CD14-positive monocyte (primary cell): ENCODE measurements at regions of chr17 and their contacts with region 1.

Region 1: GRCh38 chr17:39621523-39622379 is 5.0 kb upstream of the PPP1R1B start:
- DNase-seq: peak; percentile 79 to 86 (median 84)
- H3K4me3 ChIP-seq: no peak overlapping the region
- H3K4me3 Mint-ChIP-seq: peak overlapping the region; percentile 25 to 69
- H3K27ac ChIP-seq: no peak overlapping the region
- H3K27ac Mint-ChIP-seq: peak overlapping the region in 3 of 7 donors; percentile 48 to 66 (median 64)
- H3K4me1 ChIP-seq: peaks cover 20 to 29% of the 10 kb centered on the region in 2 donors
- H3K4me1 Mint-ChIP-seq: peaks cover 26% of the 10 kb centered on the region
- H3K27me3 ChIP-seq: peaks cover 17 to 61% of the 10 kb centered on the region in 2 donors
- H3K27me3 Mint-ChIP-seq: peaks cover 52 to 80% (median 74%) of the 10 kb centered on the region in 3 donors
- CTCF ChIP-seq: peak; percentile 100

Region 2: DNA sequence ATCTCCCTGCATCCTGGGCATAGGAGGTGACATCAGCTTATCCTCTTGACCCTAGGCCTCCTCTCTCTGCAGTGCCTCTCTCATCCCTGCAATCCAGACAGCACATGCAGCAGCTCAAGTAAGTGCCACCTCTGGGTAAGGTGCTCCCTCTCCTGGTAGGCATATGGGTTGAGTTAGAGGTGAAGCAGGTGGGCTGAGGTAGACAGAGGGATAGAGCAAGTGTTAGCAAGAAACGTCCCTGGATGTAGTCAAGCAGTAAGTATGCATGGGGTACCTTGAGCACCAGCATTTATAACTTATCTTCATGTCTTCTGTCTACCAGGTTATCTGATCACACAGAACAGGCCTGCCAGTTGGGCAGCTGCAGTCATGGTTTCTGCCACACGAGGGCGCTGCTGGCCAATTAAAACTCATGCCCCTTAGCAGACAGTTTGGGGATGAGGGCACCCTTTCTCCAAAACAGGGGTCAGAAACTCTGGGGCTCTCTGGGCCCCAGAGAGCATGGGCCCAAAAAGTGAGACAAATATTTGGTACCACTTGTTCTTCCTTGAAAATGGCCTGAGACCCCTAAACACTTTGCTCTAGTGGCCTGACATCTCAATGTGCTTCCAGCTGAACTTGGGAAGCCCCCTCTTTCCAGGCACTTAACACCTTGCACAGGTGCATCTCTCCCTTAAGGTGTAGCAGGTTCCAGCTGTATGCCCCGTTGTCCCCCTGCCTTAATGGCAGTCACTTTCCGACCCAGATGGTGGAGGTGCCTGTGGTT is 73.9 kb before region 1 on chr17:
- intact Hi-C with region 1: loop called (anchors 5 kb)
- DNase-seq: peak; percentile 46 to 57 (median 54)
- H3K4me3 ChIP-seq: no peak overlapping the region
- H3K4me3 Mint-ChIP-seq: no peak overlapping the region
- H3K27ac ChIP-seq: no peak overlapping the region
- H3K27ac Mint-ChIP-seq: no peak overlapping the region
- H3K4me1 ChIP-seq: peaks cover 3 to 13% of the 10 kb centered on the region in 2 donors
- H3K4me1 Mint-ChIP-seq: peaks cover 18% of the 10 kb centered on the region
- H3K27me3 ChIP-seq: no peaks in the 10 kb centered on the region
- H3K27me3 Mint-ChIP-seq: peaks cover 0 to 2% (median 0%) of the 10 kb centered on the region in 3 donors
- CTCF ChIP-seq: peak; percentile 95

Region 3: GRCh38 chr17:39598047-39598481 is 23.7 kb before region 1 on chr17:
- intact Hi-C with region 1: no loop called
- DNase-seq: no peak
- H3K4me3 ChIP-seq: no peak overlapping the region
- H3K4me3 Mint-ChIP-seq: peak overlapping the region in 1 of 2 donors; percentile 75
- H3K27ac ChIP-seq: no peak overlapping the region
- H3K27ac Mint-ChIP-seq: no peak overlapping the region
- H3K4me1 ChIP-seq: no peaks in the 10 kb centered on the region
- H3K4me1 Mint-ChIP-seq: peaks cover 8% of the 10 kb centered on the region
- H3K27me3 ChIP-seq: peaks cover 81 to 97% of the 10 kb centered on the region in 2 donors
- H3K27me3 Mint-ChIP-seq: peaks cover 96 to 99% (median 97%) of the 10 kb centered on the region in 3 donors
- CTCF ChIP-seq: no peak

Region 4: GRCh38 chr17:39636927-39637736 is 15.4 kb after region 1 on chr17 and contains the start of gene STARD3:
- intact Hi-C with region 1: loop called in 1 of 2 experiments (anchors 1 kb)
- DNase-seq: peak; percentile 84 to 88 (median 85)
- H3K4me3 ChIP-seq: peak within 1 kb of the TSS; percentile 85 to 90 (median 87)
- H3K4me3 Mint-ChIP-seq: peak within 1 kb of the TSS; percentile 87 to 93
- H3K27ac ChIP-seq: peak within 1 kb of the TSS; percentile 71 to 90
- H3K27ac Mint-ChIP-seq: peak within 1 kb of the TSS; percentile 86 to 96 (median 93)
- H3K4me1 ChIP-seq: peaks cover 59 to 71% of the 10 kb centered on the region in 2 donors
- H3K4me1 Mint-ChIP-seq: peaks cover 64% of the 10 kb centered on the region
- H3K27me3 ChIP-seq: peaks cover 0 to 4% of the 10 kb centered on the region in 2 donors
- H3K27me3 Mint-ChIP-seq: peaks cover 4 to 8% (median 8%) of the 10 kb centered on the region in 3 donors
- CTCF ChIP-seq: no peak
- polyA plus RNA-seq, gene STARD3: 35.1 to 114 (median 45.3) TPM

Region 5: DNA sequence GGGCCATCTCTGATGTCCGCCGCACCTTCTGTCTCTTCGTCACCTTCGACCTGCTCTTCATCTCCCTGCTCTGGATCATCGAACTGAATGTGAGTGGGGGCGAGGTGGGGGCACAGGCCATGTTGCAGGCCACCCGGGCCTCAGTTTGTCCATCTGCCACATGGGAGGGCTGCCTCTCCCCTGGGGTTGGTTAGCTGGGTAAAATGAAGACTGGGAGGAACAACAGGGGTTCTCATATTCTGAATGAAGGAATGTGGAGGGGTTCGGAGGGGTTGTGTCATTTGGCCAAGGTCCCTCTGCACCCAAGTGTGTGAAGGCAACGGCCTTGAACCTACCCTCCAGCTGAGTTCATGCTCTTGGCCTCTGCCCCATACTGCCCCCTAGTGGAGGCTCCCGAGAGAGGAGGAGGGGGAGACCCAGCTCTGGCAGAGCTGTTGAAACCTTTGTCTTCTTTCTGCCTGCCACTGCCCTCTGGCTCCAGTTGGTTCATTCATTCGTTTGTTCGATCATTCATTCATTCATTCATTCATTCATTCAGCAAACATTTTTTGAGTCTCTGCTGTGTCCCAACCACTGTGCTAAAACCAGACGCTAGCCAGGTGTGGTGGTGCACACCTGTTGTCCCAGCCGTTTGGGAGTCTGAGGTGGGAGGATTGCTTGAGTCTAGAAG is 32.0 kb after region 1 on chr17:
- intact Hi-C with region 1: loop called in 1 of 2 experiments (anchors 2 kb)
- DNase-seq: peak; percentile 53 to 62 (median 58)
- H3K4me3 ChIP-seq: no peak overlapping the region
- H3K4me3 Mint-ChIP-seq: no peak overlapping the region
- H3K27ac ChIP-seq: no peak overlapping the region
- H3K27ac Mint-ChIP-seq: peak overlapping the region in 2 of 7 donors; percentile 68 to 89
- H3K4me1 ChIP-seq: peaks cover 3 to 7% of the 10 kb centered on the region in 2 donors
- H3K4me1 Mint-ChIP-seq: peaks cover 24% of the 10 kb centered on the region
- H3K27me3 ChIP-seq: no peaks in the 10 kb centered on the region
- H3K27me3 Mint-ChIP-seq: peaks cover 0 to 3% (median 1%) of the 10 kb centered on the region in 3 donors
- CTCF ChIP-seq: peak; percentile 95

Region 6: DNA sequence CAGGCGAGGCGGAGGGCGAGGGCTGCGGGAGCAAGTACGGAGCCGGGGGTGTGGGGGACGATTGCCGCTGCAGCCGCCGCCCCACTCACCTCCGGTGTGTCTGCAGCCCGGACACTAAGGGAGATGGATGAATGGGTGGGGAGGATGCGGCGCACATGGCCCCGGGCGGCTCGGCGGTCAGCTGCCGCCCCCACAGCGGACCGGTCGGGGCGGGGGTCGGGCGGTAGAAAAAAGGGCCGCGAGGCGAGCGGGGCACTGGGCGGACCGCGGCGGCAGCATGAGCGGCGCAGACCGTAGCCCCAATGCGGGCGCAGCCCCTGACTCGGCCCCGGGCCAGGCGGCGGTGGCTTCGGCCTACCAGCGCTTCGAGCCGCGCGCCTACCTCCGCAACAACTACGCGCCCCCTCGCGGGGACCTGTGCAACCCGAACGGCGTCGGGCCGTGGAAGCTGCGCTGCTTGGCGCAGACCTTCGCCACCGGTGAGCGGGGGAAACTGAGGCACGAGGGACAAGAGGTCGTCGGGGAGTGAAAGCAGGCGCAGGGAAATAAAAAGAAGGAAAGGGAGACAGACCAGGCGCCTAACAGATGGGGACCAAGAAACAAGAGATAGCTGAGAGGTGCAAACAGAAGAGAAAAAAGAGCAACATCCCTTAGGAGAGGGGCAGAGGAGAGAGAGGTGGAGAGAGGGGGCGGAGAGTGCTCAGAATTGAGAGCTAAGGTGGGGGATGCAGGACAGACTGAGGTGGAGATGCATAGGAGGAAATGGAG is 46.6 kb after region 1 on chr17 and contains the start of gene PNMT:
- intact Hi-C with region 1: loop called in 1 of 2 experiments (anchors 5 kb)
- DNase-seq: peak; percentile 29 to 54 (median 45)
- H3K4me3 ChIP-seq: peak within 1 kb of the TSS in 1 of 3 experiments; percentile 63
- H3K4me3 Mint-ChIP-seq: peak within 1 kb of the TSS in 1 of 2 donors; percentile 83
- H3K27ac ChIP-seq: no peak within 1 kb of the TSS
- H3K27ac Mint-ChIP-seq: peak within 1 kb of the TSS in 1 of 7 donors; percentile 46
- H3K4me1 ChIP-seq: peaks cover 12 to 14% of the 10 kb centered on the region in 2 donors
- H3K4me1 Mint-ChIP-seq: peaks cover 14% of the 10 kb centered on the region
- H3K27me3 ChIP-seq: peaks cover 19 to 68% of the 10 kb centered on the region in 2 donors
- H3K27me3 Mint-ChIP-seq: peaks cover 57 to 92% (median 71%) of the 10 kb centered on the region in 3 donors
- CTCF ChIP-seq: peak; percentile 62
- polyA plus RNA-seq, gene PNMT: not detected

Region 7: DNA sequence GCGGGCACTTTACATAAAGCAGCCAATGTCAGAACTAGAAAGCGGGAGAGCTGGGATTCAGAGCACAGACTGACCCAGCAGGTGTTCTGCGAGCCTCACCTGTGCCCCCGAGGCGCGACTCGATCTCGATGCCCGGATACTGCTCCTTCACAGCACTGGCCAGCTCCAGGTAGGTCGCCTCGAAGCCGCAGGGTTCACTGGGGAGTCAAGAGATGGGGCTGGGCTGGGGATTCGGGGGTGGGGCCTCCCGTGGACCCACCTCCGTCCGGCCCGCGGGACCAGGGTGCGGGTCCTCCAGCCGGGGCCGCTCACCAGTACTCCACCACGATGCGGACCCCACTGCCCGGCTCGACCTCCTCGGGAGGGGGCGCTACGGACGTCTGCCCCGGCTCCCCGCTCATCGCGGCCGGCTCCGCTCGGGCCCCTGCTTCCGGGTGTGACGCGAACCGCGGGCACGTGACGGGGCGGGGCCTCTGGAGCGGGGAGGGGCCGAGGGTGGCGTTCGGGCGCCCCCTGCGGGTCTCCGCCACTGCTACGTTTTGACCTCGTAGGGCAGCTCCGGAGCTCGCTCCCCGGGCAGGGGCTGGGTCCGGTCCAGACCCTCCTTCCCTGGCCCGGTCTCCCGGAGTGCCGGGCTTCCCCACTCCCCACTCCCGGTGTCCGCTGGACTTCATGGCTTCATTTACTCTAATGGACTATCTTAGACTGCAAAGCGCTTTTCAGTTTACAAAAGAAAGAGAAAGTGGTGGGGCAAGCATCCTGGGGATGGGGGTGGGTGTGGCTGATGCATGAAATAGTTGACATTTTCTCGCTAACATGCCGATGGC is 108.6 kb after region 1 on chr17 and contains the start of gene MIEN1:
- intact Hi-C with region 1: loop called in 1 of 2 experiments (anchors 5 kb)
- DNase-seq: peak; percentile 83 to 88 (median 84)
- H3K4me3 ChIP-seq: peak within 1 kb of the TSS; percentile 69 to 95 (median 86)
- H3K4me3 Mint-ChIP-seq: peak within 1 kb of the TSS; percentile 84 to 90
- H3K27ac ChIP-seq: peak within 1 kb of the TSS; percentile 48 to 96
- H3K27ac Mint-ChIP-seq: peak within 1 kb of the TSS; percentile 87 to 94 (median 91)
- H3K4me1 ChIP-seq: peaks cover 9 to 13% of the 10 kb centered on the region in 2 donors
- H3K4me1 Mint-ChIP-seq: peaks cover 9% of the 10 kb centered on the region
- H3K27me3 ChIP-seq: peaks cover 0 to 5% of the 10 kb centered on the region in 2 donors
- H3K27me3 Mint-ChIP-seq: peaks cover 11 to 19% (median 17%) of the 10 kb centered on the region in 3 donors
- CTCF ChIP-seq: peak; percentile 97
- polyA plus RNA-seq, gene MIEN1: 61.7 to 141 (median 124) TPM

Region 8: GRCh38 chr17:39754161-39754951 is 132.6 kb after region 1 on chr17:
- intact Hi-C with region 1: loop called (anchors 2 to 5 kb)
- DNase-seq: peak; percentile 96 to 98 (median 98)
- H3K4me3 ChIP-seq: peak overlapping the region; percentile 47 to 72 (median 59)
- H3K4me3 Mint-ChIP-seq: peak overlapping the region; percentile 67 to 84
- H3K27ac ChIP-seq: peak overlapping the region; percentile 83 to 97
- H3K27ac Mint-ChIP-seq: peak overlapping the region; percentile 72 to 87 (median 85)
- H3K4me1 ChIP-seq: peaks cover 38 to 41% of the 10 kb centered on the region in 2 donors
- H3K4me1 Mint-ChIP-seq: peaks cover 41% of the 10 kb centered on the region
- H3K27me3 ChIP-seq: no peaks in the 10 kb centered on the region
- H3K27me3 Mint-ChIP-seq: peaks cover 10 to 25% (median 15%) of the 10 kb centered on the region in 3 donors
- CTCF ChIP-seq: peak; percentile 98